ENCODE measurements at regions of chr1 and their contacts with region 1.

Region 1: GRCh38 chr1:17984583-17984982 is 123.0 kb upstream of the IGSF21 start:
- DNase-seq: peak; percentile 23 to 69 (median 38)
- H3K4me3 ChIP-seq: no peak overlapping the region
- H3K27ac ChIP-seq: no peak overlapping the region
- H3K4me1 ChIP-seq: no peaks in the 10 kb centered on the region
- H3K27me3 ChIP-seq: peaks cover 10% of the 10 kb centered on the region
- CTCF ChIP-seq: peak; percentile 55 to 68 (median 62)
- POLR2A ChIP-seq: no peak

Region 2: DNA sequence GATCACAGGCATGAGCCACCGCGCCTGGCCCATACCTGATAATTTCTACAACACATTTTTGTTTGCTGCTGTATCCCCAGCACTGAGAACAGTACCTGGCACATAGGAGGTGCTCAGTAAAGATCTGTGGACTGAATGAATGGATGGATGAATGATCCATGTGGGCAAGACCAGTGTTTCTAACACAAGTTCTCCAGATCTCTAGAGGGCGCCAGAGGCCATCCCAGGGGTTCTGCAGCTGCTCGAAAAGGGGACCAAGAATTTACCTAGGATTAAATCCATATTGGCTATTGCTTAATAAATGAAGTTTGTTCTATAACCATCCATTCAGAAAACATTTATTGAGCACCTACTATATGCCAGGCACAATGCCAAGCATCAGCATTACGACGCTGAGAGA is 61.8 kb before region 1 on chr1:
- intact Hi-C with region 1: no loop called
- DNase-seq: peak; percentile 30 to 67 (median 58)
- H3K4me3 ChIP-seq: no peak overlapping the region
- H3K27ac ChIP-seq: no peak overlapping the region
- H3K4me1 ChIP-seq: no peaks in the 10 kb centered on the region
- H3K27me3 ChIP-seq: peaks cover 21% of the 10 kb centered on the region
- CTCF ChIP-seq: peak in 5 of 6 experiments; percentile 15 to 59 (median 45)
- POLR2A ChIP-seq: no peak

Region 3: DNA sequence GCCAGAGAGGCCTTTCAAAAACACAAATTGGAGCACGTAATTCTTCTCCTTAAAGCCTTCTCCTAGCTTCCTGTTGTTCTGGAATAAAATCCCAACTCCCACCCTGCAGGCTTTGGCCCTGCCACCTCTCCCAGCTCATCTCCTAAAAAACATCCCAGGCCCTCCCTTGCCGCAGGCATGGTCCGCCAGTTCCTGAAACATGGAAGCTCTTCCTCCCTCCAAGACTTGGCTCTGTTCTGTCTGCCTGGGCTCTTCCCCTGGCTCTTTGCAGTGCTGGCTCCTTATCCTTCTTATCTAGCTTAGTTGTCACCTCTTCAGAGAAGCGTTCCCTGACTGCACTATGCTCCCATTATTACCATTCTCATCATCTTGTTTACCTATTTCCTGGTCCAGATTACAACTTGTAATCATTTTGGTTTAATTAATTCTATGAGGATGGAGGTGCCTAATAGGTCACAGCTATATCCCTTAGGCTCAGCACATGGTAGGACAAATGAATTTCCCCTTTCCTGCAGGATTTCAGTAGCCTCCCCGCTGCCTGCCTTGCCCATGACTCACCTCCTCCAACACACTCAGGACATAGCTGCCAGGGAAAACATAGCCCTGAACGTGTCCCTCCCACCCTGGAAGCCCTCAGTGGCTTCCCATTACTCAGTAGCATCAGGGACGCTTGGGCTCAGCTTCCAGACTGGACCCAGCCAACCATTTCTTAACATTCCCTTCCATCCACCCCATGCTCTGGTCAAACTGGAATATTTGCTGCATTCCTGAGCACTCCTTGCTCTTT is 107.3 kb after region 1 on chr1:
- intact Hi-C with region 1: loop called (anchors 5 to 10 kb)
- DNase-seq: peak in 5 of 7 donors; percentile 39 to 72 (median 66)
- H3K4me3 ChIP-seq: no peak overlapping the region
- H3K27ac ChIP-seq: no peak overlapping the region
- H3K4me1 ChIP-seq: no peaks in the 10 kb centered on the region
- H3K27me3 ChIP-seq: no peaks in the 10 kb centered on the region
- CTCF ChIP-seq: no peak
- POLR2A ChIP-seq: no peak

Region 4: GRCh38 chr1:18099026-18099425 is 114.4 kb after region 1 on chr1:
- intact Hi-C with region 1: loop called (anchors 5 to 10 kb)
- DNase-seq: no peak
- H3K4me3 ChIP-seq: no peak overlapping the region
- H3K27ac ChIP-seq: no peak overlapping the region
- H3K4me1 ChIP-seq: no peaks in the 10 kb centered on the region
- H3K27me3 ChIP-seq: no peaks in the 10 kb centered on the region
- CTCF ChIP-seq: no peak
- POLR2A ChIP-seq: no peak

Region 5: DNA sequence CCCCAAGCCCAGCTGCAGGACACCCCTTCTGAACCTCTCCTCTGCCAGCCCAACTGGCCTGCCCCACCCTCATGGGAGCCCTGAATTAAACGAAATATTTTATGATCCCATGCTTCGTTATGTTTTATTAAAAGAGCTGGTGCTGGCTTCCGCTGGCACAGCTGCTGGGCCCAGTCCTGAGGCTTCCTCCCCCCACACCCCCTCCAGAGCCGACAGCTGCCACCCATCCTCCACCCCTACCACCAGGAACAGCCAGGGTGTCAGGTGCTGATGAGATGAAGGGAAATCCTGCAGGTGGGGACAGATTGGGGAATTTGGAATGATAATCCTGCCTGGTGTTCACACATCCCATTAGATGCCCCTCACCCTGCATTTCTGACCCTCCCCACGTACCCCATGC is 142.0 kb after region 1 on chr1:
- intact Hi-C with region 1: no loop called
- DNase-seq: no peak
- H3K4me3 ChIP-seq: no peak overlapping the region
- H3K27ac ChIP-seq: no peak overlapping the region
- H3K4me1 ChIP-seq: no peaks in the 10 kb centered on the region
- H3K27me3 ChIP-seq: no peaks in the 10 kb centered on the region
- CTCF ChIP-seq: no peak
- POLR2A ChIP-seq: no peak

Region 6: DNA sequence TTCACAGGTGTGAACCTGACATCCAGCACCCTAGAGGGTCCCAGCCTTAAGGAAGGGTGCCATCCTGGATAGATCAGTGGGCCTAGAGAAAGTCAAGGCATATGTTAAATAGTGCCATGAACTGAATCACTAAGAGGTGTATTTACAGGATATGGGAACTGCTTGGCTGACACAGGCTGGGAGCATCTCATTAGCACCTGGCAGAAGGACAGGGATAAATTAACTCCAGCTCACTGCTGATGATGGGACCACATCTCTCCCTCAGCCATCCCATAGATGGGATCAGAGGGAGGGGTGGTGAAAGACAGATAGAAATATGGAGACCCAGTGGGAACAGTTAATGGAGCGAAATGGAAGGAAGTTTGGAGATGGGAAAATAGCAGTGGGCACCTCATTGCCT is 245.0 kb after region 1 on chr1:
- intact Hi-C with region 1: loop called in 1 of 2 experiments (anchors 10 kb)
- DNase-seq: no peak
- H3K4me3 ChIP-seq: no peak overlapping the region
- H3K27ac ChIP-seq: no peak overlapping the region
- H3K4me1 ChIP-seq: no peaks in the 10 kb centered on the region
- H3K27me3 ChIP-seq: peaks cover 4% of the 10 kb centered on the region
- CTCF ChIP-seq: no peak
- POLR2A ChIP-seq: no peak